ENCODE measurements at regions of chr7 and their contacts with region 1.

Region 1: DNA sequence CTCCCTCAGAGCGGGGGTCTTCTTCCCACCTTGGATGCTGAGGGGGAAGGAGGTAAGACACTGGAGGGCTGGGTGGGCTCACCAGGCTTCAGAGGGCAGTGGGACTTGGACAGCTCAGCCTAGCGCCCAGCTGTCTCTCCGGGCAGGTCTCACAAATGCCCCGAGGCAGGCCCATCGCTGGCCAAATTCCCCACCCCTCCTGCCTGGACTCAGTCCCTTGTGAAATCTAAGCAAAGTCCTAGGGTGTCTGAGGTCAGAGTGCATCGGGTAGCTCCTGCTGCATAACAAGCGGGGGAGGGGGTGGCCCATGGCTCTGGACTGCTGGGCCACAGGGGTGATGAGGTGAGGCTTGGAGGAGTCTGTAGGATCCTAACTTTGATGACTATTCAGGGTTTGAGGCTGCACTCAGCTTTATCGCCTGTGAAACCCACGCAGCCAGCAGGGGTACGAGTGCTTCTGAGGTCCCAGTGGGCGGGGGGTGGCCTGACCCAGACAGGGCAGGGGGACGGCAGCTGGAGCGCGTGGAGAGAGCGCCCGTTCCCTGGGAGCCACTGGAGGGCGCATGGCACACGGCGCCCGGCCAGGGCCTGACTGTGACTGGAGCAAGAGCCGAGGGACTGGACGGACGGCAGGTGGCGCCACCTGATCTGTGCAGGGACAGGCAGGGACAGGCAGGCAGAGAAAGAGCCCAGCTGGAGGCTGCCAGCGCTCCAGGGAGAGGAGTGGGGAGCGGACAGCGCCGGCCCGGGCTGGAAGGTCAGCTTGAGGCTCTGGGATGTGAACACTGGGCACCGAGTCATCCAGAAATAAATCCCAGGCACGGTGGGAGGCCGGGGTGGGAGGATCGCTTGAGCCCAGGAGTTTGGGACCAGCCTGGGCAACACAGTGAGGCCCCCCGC is 10.0 kb downstream of the CYP2W1 start:
- ATAC-seq: peak; percentile 87 to 96 (median 90)
- H3K4me3 ChIP-seq: no peak overlapping the region
- H3K27ac ChIP-seq: peak overlapping the region in 1 of 2 donors; percentile 34
- H3K4me1 ChIP-seq: peaks cover 25 to 27% of the 10 kb centered on the region in 2 donors

Region 2: GRCh38 chr7:1065263-1066260 is 72.6 kb after region 1 on chr7:
- in situ Hi-C with region 1: loop called in 1 of 9 experiments (anchors 10 kb)
- ATAC-seq: peak; percentile 86 to 100 (median 92)
- H3K4me3 ChIP-seq: no peak overlapping the region
- H3K27ac ChIP-seq: no peak overlapping the region
- H3K4me1 ChIP-seq: peaks cover 3 to 11% of the 10 kb centered on the region in 2 donors

Region 3: GRCh38 chr7:1137510-1138167 is 144.7 kb after region 1 on chr7:
- in situ Hi-C with region 1: loop called in 1 of 9 experiments (anchors 10 kb)
- ATAC-seq: peak; percentile 74 to 87 (median 84)
- H3K4me3 ChIP-seq: peak overlapping the region; percentile 69 to 99 (median 89)
- H3K27ac ChIP-seq: peak overlapping the region; percentile 77 to 79
- H3K4me1 ChIP-seq: peaks cover 7 to 12% of the 10 kb centered on the region in 2 donors

Region 4: GRCh38 chr7:1159891-1160668 is 167.1 kb after region 1 on chr7 and contains the start of gene ZFAND2A:
- in situ Hi-C with region 1: loop called in 2 of 9 experiments (anchors 25 kb)
- ATAC-seq: peak; percentile 90 to 99 (median 95)
- H3K4me3 ChIP-seq: peak within 1 kb of the TSS; percentile 72 to 94 (median 72)
- H3K27ac ChIP-seq: peak within 1 kb of the TSS; percentile 84 to 85
- H3K4me1 ChIP-seq: peaks cover 6 to 12% of the 10 kb centered on the region in 2 donors
- total RNA-seq, gene ZFAND2A: 14.7 to 68.5 (median 41.3) TPM

Measured in motor neuron (in vitro differentiated cells).